Head of caudate nucleus (tissue), 42 donors: ENCODE measurements at regions of chr6 and their contacts with region 1.

Region 1: GRCh38 chr6:18323935-18324705 is 59.8 kb upstream of the DEK start:
- DNase-seq: peak in 7 of 42 donors; percentile 11 to 58 (median 25)

Region 2: DNA sequence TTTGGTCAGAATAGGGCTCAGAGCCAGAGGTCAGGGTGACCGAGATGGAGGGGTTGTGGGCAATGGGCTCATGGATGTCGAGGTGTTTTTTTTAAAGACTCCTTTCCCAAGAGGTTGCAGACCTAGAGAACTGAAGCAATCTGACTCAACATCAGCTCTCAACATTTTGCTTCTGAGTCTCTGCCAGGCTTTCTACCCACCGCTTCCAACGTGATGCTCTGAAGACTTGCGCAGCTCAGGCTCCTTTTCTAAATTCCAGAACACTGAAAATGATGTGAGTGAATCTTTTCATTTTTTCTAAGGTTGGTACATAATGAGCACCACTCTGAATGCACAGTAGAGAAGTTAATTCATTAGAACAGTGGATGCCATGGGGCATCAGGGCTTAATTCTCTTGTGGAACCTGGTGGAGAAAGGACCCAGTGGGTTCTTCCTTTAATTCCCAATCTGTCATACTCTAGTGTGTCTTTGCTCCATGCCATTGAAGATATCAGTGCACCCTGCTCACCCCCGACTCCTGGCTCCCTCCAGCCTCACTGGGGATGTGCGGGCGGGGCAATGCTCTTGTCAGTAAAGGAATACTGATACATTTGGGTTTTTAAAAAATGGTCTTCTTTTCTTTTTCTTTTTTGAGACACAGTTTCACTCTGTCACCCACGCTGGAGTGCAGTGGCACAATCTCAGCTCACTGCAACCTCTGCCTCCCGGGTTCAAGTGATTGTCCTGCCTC is 319.7 kb before region 1 on chr6:
- intact Hi-C with region 1: no loop called
- DNase-seq: peak in 28 of 42 donors; percentile 15 to 74 (median 46)

Region 3: DNA sequence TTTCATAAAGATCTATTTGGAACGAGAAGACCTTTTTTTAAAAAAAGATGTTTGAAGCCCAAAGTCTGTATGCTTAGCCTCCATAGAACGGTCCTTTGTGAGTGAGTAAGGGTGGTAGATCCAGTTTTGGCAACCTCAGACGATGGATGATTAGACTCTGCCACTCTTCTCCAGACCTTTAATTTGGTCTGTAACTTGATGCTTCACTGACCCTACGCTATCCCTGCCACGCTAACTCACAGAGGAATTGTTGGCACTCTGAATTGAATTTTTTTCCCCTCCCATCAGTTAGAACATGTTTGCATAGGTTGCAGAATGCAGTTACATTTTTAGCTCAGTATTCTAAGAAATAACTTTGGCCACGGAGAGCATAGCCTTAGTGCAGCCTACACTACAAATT is 44.0 kb before region 1 on chr6:
- intact Hi-C with region 1: no loop called
- DNase-seq: no peak

Region 4: GRCh38 chr6:18503593-18504231 is 179.6 kb after region 1 on chr6:
- intact Hi-C with region 1: loop called (anchors 2 kb)
- DNase-seq: peak in 41 of 42 donors; percentile 8 to 89 (median 68)

Region 5: GRCh38 chr6:18551228-18551627 is 227.1 kb after region 1 on chr6:
- intact Hi-C with region 1: no loop called
- DNase-seq: no peak